H1 (cell line): ENCODE measurements at regions of chr4 and their contacts with region 1.

Region 1: DNA sequence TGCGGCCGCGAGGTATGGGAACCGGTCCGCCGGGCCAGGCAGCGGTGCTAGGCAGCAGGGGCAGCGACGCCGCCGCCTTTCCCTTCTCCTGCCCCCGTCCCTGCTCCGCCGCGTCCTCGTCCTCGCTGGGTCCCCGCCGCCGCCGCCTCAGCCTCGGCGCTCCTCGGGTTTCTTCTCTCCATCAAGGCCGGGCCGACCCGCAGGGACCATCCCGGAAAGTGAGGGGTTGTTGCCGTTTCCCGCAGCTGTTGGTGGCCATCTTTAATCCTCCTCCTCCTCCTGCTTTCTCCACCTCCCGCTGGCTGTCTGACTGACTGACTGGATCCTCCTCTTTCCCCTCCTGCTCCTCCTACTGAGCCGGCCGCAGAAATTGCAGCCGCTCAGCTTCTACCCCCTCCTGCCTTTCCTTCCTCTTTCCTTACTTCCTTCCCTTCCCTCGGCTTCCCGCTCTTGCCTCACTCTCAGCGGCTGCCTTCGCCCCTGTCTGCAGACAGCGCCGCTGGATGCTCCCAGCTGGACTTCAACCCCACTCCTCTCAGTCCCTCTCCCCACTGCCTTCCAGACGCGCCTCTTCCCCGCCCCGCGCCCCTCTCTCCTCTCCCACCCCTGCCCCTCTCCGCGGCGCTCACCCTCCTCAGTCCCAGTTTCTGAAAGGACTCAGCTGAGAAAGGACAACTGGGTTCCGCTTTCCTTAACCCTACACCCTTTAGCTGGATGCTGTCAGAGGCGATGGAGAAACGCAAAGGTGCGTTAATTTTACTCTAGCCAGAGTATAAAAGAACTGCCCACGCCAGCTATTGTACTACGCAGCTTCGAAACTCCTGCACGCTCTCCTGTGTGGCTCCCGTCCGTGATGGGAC is at the start of gene WDFY3:
- DNase-seq: peak; percentile 51 to 86
- H3K4me3 ChIP-seq: peak within 1 kb of the TSS; percentile 55 to 94 (median 84)
- H3K27ac ChIP-seq: peak within 1 kb of the TSS; percentile 87
- H3K4me1 ChIP-seq: peaks cover 0 to 8% (median 4%) of the 10 kb centered on the region in 4 experiments; a peak in 2 of 7 replicates
- H3K27me3 ChIP-seq: no peaks in the 10 kb centered on the region
- CTCF ChIP-seq: no peak
- EP300 ChIP-seq: no peak
- POLR2A ChIP-seq: peak; percentile 79; a peak in 2 of 3 replicates
- RAD21 ChIP-seq: no peak; a peak in 1 of 4 replicates
- total RNA-seq, gene WDFY3: 50.7 and 62.4 TPM in 2 replicates

Region 2: DNA sequence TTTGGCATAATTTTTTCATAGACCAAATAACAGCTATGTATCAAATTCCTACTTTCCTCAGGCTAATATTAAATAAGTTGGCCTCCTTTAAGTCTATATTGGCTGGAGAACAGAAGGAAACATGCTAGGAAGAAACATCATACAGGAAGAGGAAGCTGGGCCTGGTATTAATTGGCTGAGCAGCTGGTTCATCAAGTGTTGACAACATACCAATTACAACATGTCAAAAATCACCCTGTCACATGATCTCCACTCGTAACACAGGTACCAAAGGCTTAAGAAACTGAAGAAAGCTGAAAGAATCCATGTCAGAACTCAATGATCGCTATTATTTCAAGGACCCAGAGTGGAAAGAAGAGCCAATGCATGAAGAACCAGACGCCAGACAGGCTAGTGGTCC is 10.6 kb before region 1 on chr4:
- CTCF ChIA-PET with region 1: interaction called, 4 read pairs
- POLR2A ChIA-PET with region 1: interaction called, 15 read pairs
- DNase-seq: no peak
- H3K4me3 ChIP-seq: no peak overlapping the region
- H3K27ac ChIP-seq: no peak overlapping the region
- H3K4me1 ChIP-seq: peaks cover 0 to 3% (median 1%) of the 10 kb centered on the region in 4 experiments; a peak in 4 of 7 replicates
- H3K27me3 ChIP-seq: no peaks in the 10 kb centered on the region
- CTCF ChIP-seq: no peak
- EP300 ChIP-seq: no peak
- POLR2A ChIP-seq: no peak
- RAD21 ChIP-seq: no peak

Region 3: GRCh38 chr4:85005865-85006377 is 39.3 kb after region 1 on chr4:
- CTCF ChIA-PET with region 1: no interaction called
- POLR2A ChIA-PET with region 1: no interaction called
- DNase-seq: no peak
- H3K4me3 ChIP-seq: no peak overlapping the region
- H3K27ac ChIP-seq: no peak overlapping the region
- H3K4me1 ChIP-seq: no peaks in the 10 kb centered on the region
- H3K27me3 ChIP-seq: no peaks in the 10 kb centered on the region
- CTCF ChIP-seq: no peak
- EP300 ChIP-seq: no peak
- POLR2A ChIP-seq: no peak
- RAD21 ChIP-seq: no peak

Region 4: DNA sequence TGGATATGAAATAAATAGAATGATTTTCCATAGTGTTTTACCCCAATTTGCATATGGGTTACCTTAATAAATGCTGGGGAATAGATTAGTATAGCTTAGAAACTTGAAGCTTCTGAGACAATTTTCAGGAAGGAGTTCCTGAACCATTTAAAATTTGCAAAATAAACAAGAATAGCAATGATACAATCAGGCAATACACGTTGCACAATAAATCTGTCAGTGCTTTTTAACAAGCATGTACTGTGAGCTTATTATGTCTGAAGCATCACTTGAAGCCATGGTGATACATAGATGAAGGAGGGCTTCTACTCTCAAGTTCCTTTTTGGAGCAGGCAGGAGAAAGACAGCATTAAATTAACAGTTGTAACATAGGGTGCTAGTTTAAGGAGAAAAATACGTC is 84.1 kb after region 1 on chr4:
- CTCF ChIA-PET with region 1: no interaction called
- POLR2A ChIA-PET with region 1: no interaction called
- DNase-seq: no peak
- H3K4me3 ChIP-seq: no peak overlapping the region
- H3K27ac ChIP-seq: no peak overlapping the region
- H3K4me1 ChIP-seq: no peaks in the 10 kb centered on the region
- H3K27me3 ChIP-seq: no peaks in the 10 kb centered on the region
- CTCF ChIP-seq: no peak
- EP300 ChIP-seq: no peak
- POLR2A ChIP-seq: no peak
- RAD21 ChIP-seq: no peak

Region 5: GRCh38 chr4:85062466-85062865 is 95.9 kb after region 1 on chr4:
- CTCF ChIA-PET with region 1: no interaction called
- POLR2A ChIA-PET with region 1: no interaction called
- DNase-seq: no peak
- H3K4me3 ChIP-seq: no peak overlapping the region
- H3K27ac ChIP-seq: no peak overlapping the region
- H3K4me1 ChIP-seq: no peaks in the 10 kb centered on the region; a peak in 1 of 7 replicates
- H3K27me3 ChIP-seq: no peaks in the 10 kb centered on the region
- CTCF ChIP-seq: no peak
- EP300 ChIP-seq: no peak
- POLR2A ChIP-seq: no peak
- RAD21 ChIP-seq: no peak